BJ (cell line): ENCODE measurements at regions of chr6 and their contacts with region 1.

Region 1: DNA sequence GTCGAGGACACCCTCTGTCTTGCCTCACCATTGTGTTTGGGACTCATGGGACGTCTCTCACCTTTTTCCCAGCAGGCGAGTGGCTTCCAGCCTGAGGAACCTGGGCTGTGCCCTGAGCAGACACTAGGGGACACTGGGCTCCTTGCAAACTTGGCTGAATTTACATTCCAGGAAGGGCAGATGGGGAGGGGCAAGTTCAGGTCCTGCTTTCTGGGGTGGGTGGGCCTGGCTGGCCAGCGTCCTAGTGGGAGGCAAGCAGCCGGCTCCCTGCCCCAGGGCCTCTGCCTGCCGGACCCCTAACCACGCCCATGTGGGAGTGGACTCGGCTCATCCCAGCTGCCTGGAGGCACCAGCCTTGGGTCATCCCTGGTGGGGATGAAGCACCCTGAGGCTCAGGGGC is 48.2 kb upstream of the MLN start:
- DNase-seq: no peak
- H3K4me3 ChIP-seq: no peak overlapping the region
- H3K27me3 ChIP-seq: no peaks in the 10 kb centered on the region; the same call in 1 of the 2 replicates
- CTCF ChIP-seq: peak; percentile 67

Region 2: DNA sequence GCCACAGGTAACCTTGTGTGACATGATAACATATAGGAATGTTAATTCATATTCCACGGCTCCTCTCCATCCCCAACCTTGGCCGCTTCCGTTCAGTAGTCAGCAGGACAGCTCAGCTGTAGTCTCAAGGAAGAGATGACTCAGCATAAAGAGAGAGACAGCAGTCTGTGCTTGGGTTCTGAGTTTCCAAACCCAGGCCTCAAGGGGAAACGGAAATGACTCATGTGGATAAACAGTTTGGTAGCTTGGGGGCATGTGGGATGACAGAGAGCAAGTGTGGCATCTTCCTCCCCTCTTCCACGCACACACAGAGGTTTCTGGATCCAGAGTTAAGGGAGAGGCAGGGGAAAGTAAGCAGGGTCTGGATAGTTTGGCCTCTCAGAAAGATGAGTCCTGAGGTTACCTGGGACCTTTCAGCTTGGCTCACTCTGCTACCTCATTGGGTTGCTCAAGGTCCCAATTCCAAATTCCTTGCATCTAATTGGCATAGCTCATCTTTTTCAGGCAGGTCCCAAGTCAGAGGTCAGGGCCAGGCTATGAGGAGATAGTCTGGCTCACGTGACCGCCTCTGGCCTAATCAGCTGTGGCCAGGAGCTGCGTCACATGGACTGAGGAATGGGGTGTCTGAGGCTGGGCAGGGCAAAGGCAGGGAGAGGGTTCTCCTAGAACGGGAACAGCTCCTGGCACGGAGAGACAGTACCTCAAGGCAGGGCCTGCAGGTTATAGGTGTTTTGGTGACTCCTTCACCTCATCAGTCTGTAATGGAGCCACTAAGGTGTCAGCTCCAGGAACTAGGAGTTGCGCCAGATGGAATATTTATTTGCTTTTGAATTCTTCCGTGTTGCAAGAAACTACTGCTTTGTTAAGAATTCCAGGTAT is 11.7 kb before region 1 on chr6:
- CTCF ChIA-PET with region 1: interaction called, 15 read pairs
- POLR2A ChIA-PET with region 1: no interaction called
- DNase-seq: peak; percentile 92
- H3K4me3 ChIP-seq: no peak overlapping the region
- H3K27me3 ChIP-seq: no peaks in the 10 kb centered on the region
- CTCF ChIP-seq: no peak